Gastrocnemius medialis (tissue), 4 donors: ENCODE measurements at regions of chr18 and their contacts with region 1.

Region 1: GRCh38 chr18:65347446-65347845 is 403.4 kb upstream of the CDH7 start:
- DNase-seq: no peak
- ATAC-seq: no peak
- H3K4me3 ChIP-seq: no peak overlapping the region
- H3K27ac ChIP-seq: no peak overlapping the region
- H3K4me1 ChIP-seq: no peaks in the 10 kb centered on the region
- H3K27me3 ChIP-seq: no peaks in the 10 kb centered on the region
- CTCF ChIP-seq: no peak
- POLR2A ChIP-seq: no peak

Region 2: DNA sequence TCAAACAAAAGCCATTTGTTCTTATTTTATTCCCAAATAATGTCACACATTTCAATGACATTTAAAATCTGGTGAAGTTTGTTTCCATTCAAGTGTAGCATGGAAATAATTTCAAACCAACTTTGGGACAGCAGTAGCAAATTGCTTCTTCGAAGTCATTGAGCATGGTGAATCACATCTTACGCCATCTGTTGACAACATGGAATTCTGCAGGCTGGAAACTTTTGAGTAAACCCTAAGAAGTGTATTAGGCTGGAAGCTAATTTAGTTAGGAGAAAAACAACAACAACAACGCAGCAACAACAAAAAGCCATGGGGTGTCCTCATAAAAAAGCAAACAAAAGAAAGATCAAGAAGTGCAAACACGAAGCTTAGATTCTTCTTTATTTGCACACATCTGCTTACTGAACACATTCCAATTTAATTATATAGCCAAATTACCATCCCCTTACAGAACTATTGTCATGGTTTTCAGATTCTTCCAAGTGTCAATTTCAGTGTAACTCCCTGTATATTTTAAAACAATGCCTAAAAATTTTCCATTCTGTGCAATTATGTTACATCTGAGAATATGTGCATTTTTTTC is 255.6 kb before region 1 on chr18:
- in situ Hi-C with region 1: no loop called
- intact Hi-C with region 1: no loop called
- DNase-seq: no peak
- ATAC-seq: no peak
- H3K4me3 ChIP-seq: no peak overlapping the region
- H3K27ac ChIP-seq: no peak overlapping the region
- H3K4me1 ChIP-seq: no peaks in the 10 kb centered on the region
- H3K27me3 ChIP-seq: no peaks in the 10 kb centered on the region
- CTCF ChIP-seq: no peak
- POLR2A ChIP-seq: no peak

Region 3: DNA sequence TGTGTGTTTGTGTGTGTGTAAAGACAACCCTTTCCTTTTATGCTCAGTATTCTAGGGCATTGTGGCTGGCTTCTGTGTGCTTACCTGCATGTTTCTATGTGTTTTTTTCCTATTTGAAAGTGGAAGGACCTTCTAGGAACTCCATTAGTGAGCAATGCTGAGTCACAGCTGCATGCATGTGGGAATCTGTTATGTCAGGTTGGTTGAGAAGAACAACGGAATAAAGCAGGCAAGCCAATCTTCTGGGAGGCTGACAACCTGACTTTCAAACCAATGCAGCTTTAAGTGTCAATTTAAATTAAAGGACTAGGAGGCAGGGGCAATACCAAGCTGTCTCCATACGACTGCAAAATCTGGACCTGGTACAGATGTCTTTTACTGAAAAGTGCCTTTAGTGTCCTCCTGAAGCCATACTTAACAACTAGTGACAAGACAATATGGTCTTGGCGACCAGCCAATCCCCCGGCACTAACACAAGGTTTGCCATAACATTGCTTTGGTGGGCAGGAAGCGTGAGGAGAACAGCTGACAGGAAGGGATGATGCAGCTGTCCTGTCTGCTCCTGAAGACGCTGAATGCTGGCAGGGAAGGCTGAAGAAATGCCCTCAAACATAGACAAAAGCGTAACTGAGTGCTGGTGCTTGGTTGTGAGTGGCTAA is 111.4 kb before region 1 on chr18:
- in situ Hi-C with region 1: loop called in 1 of 4 experiments (anchors 25 kb)
- intact Hi-C with region 1: no loop called
- DNase-seq: no peak
- ATAC-seq: no peak
- H3K4me3 ChIP-seq: no peak overlapping the region
- H3K27ac ChIP-seq: no peak overlapping the region
- H3K4me1 ChIP-seq: no peaks in the 10 kb centered on the region
- H3K27me3 ChIP-seq: no peaks in the 10 kb centered on the region
- CTCF ChIP-seq: no peak
- POLR2A ChIP-seq: no peak